ENCODE measurements at regions of chr18 and their contacts with region 1.

Region 1: DNA sequence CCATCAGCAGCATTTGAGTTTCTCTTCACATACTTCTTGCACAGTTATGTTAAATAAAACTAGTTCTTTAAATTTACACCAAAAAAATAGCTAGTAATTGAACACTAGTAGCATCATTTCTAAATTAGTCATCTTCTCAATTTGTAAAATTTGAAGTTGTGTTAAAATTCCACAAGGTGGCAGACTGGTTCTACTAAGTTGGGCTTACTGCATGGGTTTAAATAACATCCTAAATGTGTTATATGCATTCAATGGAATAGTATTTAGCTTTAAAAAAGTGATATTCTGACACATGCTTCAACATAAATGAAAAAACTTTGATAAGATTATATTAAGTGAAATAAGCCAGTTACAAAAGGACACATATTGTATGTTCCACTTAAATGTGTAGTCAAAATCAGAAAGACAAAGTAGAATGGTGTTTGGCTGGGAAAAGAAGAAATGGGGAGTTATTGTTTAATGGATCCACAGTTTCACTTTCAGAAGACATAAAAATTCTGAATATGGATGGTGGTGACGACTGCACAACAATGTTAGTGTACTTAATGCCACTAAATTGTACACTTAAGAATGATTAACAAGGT is 28.7 kb upstream of the RPRD1A start:
- DNase-seq: peak; percentile 67
- H3K4me3 Mint-ChIP-seq: no peak overlapping the region
- H3K27ac Mint-ChIP-seq: no peak overlapping the region
- H3K4me1 Mint-ChIP-seq: peaks cover 4% of the 10 kb centered on the region
- H3K27me3 Mint-ChIP-seq: peaks cover 11% of the 10 kb centered on the region

Region 2: GRCh38 chr18:35756506-35757117 is 339.4 kb before region 1 on chr18:
- intact Hi-C with region 1: loop called (anchors 10 kb)
- DNase-seq: peak; percentile 87
- H3K4me3 Mint-ChIP-seq: no peak overlapping the region
- H3K27ac Mint-ChIP-seq: no peak overlapping the region
- H3K4me1 Mint-ChIP-seq: no peaks in the 10 kb centered on the region
- H3K27me3 Mint-ChIP-seq: peaks cover 16% of the 10 kb centered on the region

Region 3: DNA sequence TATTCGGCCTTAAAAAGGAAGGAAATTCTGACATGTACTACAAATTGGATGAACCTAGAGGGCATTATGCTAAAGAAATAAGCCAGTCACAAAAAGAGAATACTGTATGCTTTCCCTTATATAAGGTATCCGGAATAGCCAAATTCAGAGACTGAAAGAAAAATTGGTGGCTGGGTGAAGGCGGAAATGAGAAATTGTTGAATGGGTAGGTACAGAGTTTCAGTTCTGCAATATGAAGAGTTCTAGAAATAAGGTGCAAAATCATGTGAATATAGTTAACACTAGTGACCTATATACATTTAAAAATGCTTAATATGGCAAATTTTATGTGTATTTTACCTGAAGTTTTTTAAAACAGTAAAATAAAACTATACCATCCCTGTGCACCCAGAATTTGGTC is 80.4 kb before region 1 on chr18:
- intact Hi-C with region 1: loop called (anchors 2 kb)
- DNase-seq: no peak
- H3K4me3 Mint-ChIP-seq: no peak overlapping the region
- H3K27ac Mint-ChIP-seq: no peak overlapping the region
- H3K4me1 Mint-ChIP-seq: no peaks in the 10 kb centered on the region
- H3K27me3 Mint-ChIP-seq: no peaks in the 10 kb centered on the region

Region 4: DNA sequence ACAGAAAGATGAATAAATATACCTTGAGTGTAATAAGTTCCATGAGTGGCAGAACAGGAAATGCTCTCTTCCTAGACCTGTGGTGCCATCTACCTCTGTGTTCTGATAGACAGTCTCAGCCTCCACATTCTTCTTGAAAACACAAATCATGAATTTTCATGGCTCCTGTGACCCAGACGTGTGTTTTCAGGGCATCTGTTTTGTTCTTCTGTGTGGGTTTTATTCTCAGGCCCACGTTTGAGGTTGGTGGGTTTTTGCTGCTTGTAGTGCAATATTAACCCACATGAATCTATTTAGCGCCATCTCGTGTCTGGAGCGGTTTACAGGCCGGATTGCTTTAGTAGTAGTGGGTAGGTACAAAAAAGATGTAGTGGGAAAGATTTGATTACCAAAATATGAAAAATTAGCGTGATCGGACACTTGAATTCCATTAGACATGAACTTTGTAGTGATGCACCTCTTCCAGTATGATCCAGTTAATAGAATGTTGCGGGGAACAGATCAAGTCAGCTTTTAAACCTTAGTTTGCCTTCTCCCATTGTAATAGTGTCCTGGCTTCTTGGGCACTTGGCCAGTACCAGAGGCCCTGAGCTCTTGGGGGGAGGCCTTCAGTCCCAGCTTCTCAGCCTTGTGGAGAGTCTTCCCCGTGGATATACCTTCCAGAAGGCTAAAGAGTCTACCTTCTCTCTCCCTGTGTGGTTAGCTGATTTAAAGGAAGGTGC is 476.3 kb after region 1 on chr18:
- intact Hi-C with region 1: loop called (anchors 5 kb)
- DNase-seq: peak; percentile 72
- H3K4me3 Mint-ChIP-seq: no peak overlapping the region
- H3K27ac Mint-ChIP-seq: no peak overlapping the region
- H3K4me1 Mint-ChIP-seq: no peaks in the 10 kb centered on the region
- H3K27me3 Mint-ChIP-seq: peaks cover 24% of the 10 kb centered on the region

Measured in activated CD4-positive, alpha-beta T cell treated with anti-CD3 and anti-CD28 coated beads, Interleukin-2, amount 10 ng/mL, durations not matched to agents 24 days and 14 days (primary cell).